ENCODE measurements at regions of chr5 and their contacts with region 1.

Region 1: GRCh38 chr5:96807075-96807654 is 580 bp downstream of the ERAP1 start:
- DNase-seq: peak; percentile 51 to 87 (median 72)
- H3K4me3 ChIP-seq: peak overlapping the region; percentile 50 to 96 (median 84)
- H3K27ac ChIP-seq: peak overlapping the region; percentile 93 to 100 (median 99)
- H3K27me3 ChIP-seq: no peaks in the 10 kb centered on the region
- CTCF ChIP-seq: peak in 17 of 56 donors; percentile 8 to 40 (median 19)

Region 2: GRCh38 chr5:96752341-96753016 is 54.7 kb before region 1 on chr5:
- intact Hi-C with region 1: loop called (anchors 10 kb)
- DNase-seq: peak in 1 of 10 donors; percentile 39
- H3K4me3 ChIP-seq: no peak overlapping the region
- H3K27ac ChIP-seq: peak overlapping the region in 30 of 59 donors; percentile 9 to 72 (median 46)
- H3K27me3 ChIP-seq: no peaks in the 10 kb centered on the region
- CTCF ChIP-seq: peak; percentile 61 to 93 (median 78)

Region 3: DNA sequence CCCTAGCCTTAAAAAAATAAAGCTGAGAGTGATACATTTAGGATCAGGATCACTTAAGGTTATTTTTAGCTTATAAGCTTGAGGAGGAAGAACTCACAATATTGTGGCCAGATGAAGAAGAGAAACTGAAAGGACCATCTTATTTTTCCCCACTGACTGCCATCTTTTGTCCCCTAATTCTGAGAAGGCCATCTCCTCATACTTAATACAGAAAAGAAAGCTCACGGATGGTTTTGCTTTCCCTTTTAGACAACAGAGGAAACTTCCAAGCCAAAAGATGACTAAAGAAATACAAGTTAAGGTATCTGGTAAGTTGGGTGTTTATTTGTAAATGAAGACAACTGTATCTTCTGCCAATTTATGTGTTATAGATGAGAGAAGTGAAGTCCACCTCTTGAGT is 35.8 kb before region 1 on chr5:
- intact Hi-C with region 1: loop called in 1 of 2 experiments (anchors 5 kb)
- DNase-seq: no peak
- H3K4me3 ChIP-seq: no peak overlapping the region
- H3K27ac ChIP-seq: peak overlapping the region in 16 of 59 donors; percentile 1 to 61 (median 33)
- H3K27me3 ChIP-seq: no peaks in the 10 kb centered on the region
- CTCF ChIP-seq: no peak

Region 4: GRCh38 chr5:96868603-96869371 is 61.6 kb after region 1 on chr5:
- intact Hi-C with region 1: loop called in 1 of 2 experiments (anchors 5 kb)
- DNase-seq: peak in 1 of 10 donors; percentile 17
- H3K4me3 ChIP-seq: peak overlapping the region in 1 of 59 donors; percentile 9
- H3K27ac ChIP-seq: no peak overlapping the region
- H3K27me3 ChIP-seq: no peaks in the 10 kb centered on the region
- CTCF ChIP-seq: peak; percentile 50 to 95 (median 87)

Region 5: GRCh38 chr5:96876292-96876850 is 69.2 kb after region 1 on chr5 and contains the start of gene ERAP2:
- intact Hi-C with region 1: loop called in 1 of 2 experiments (anchors 5 kb)
- DNase-seq: no peak
- H3K4me3 ChIP-seq: peak within 1 kb of the TSS; percentile 47 to 89 (median 68)
- H3K27ac ChIP-seq: peak within 1 kb of the TSS in 57 of 59 donors; percentile 26 to 89 (median 72)
- H3K27me3 ChIP-seq: no peaks in the 10 kb centered on the region
- CTCF ChIP-seq: peak in 4 of 56 donors; percentile 4 to 28 (median 8)
- total RNA-seq, gene ERAP2: 0.80 to 12.9 (median 4.4) TPM

Region 6: DNA sequence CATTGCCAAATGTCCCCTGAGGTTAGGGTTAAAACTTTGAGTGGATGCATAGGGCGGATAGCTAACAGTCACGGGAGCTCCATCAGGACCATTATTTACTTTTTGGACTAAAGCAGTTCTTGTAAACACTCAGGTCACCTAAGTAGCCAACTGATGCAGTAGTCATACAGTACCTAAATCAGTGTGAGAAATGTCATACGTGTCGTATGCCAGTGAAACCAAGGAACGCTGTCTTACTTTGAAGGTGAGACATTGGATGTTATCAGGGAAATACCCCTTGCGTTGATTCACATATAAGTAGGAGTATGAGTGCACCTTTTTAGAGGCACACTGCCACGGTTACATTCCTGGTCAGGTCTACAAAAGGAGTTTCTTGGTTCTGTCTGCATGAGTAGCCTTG is 230.7 kb after region 1 on chr5:
- intact Hi-C with region 1: no loop called
- DNase-seq: no peak
- H3K4me3 ChIP-seq: no peak overlapping the region
- H3K27ac ChIP-seq: peak overlapping the region in 2 of 59 donors; percentile 10 to 60
- H3K27me3 ChIP-seq: no peaks in the 10 kb centered on the region
- CTCF ChIP-seq: no peak

Region 7: DNA sequence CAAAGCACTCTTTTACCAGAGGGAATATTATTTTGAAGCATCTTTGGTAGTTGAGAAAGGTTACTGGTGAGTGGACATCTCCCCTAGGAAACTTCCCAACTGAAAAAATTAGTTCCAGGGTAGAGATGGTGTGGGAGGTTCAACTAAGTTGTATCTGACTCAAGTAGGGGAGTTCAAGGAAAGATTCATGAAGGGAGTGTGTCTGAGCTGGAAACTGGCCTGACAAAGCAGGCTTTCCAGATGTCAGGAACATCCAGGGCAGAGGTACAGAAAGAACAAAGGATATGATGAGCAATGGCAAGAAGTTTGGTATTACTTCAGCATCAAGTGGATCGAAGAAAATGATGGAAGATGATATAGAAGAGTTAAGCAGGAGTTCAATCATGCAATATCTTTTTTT is 833.9 kb after region 1 on chr5:
- intact Hi-C with region 1: no loop called
- DNase-seq: no peak
- H3K4me3 ChIP-seq: no peak overlapping the region
- H3K27ac ChIP-seq: no peak overlapping the region
- H3K27me3 ChIP-seq: no peaks in the 10 kb centered on the region
- CTCF ChIP-seq: no peak

Measured in dorsolateral prefrontal cortex (tissue), 120 donors.